Heart left ventricle (tissue), 16 donors: ENCODE measurements at regions of chr2 and their contacts with region 1.

Region 1: GRCh38 chr2:88831792-88832248 is 140.3 kb downstream of the RPIA start:
- DNase-seq: peak in 3 of 5 donors; percentile 32 to 76 (median 49)
- ATAC-seq: peak in 2 of 4 donors; percentile 28 to 44
- H3K4me3 ChIP-seq: no peak overlapping the region
- H3K27ac ChIP-seq: no peak overlapping the region
- H3K4me1 ChIP-seq: peaks cover 0 to 14% (median 0%) of the 10 kb centered on the region in 12 donors
- H3K27me3 ChIP-seq: peaks cover 0 to 6% (median 0%) of the 10 kb centered on the region in 9 donors
- CTCF ChIP-seq: peak in 11 of 12 donors; percentile 47 to 72 (median 58)
- POLR2A ChIP-seq: no peak

Region 2: GRCh38 chr2:88919087-88919738 is 87.4 kb after region 1 on chr2:
- intact Hi-C with region 1: loop called in 1 of 10 experiments (anchors 10 kb)
- DNase-seq: no peak
- ATAC-seq: no peak
- H3K4me3 ChIP-seq: no peak overlapping the region
- H3K27ac ChIP-seq: no peak overlapping the region
- H3K4me1 ChIP-seq: no peaks in the 10 kb centered on the region
- H3K27me3 ChIP-seq: peaks cover 0 to 1% (median 0%) of the 10 kb centered on the region in 9 donors
- CTCF ChIP-seq: peak; percentile 32 to 66 (median 48)
- POLR2A ChIP-seq: no peak

Region 3: DNA sequence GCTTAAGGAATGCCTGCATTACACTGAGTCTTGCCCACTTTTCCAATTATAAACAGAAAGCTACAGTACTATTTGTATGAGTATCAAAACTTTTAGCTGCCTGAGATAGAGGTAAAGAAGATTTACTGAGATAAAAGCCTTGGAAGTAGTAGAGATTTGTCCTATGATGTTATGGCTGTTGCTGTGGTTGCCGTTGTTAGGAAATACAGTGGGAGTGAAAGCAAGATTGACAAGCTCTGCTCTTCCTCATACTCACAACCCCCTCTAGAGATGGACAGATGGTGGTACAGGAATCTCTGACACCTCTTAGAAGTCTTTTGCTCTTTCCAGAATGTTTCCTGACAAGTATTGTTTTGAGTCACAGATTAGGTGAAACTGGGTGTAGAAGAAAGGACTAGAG is 102.2 kb after region 1 on chr2:
- intact Hi-C with region 1: no loop called
- DNase-seq: no peak
- ATAC-seq: no peak
- H3K4me3 ChIP-seq: no peak overlapping the region
- H3K27ac ChIP-seq: no peak overlapping the region
- H3K4me1 ChIP-seq: no peaks in the 10 kb centered on the region
- H3K27me3 ChIP-seq: no peaks in the 10 kb centered on the region
- CTCF ChIP-seq: peak in 3 of 12 donors; percentile 7 to 18 (median 12)
- POLR2A ChIP-seq: no peak

Region 4: DNA sequence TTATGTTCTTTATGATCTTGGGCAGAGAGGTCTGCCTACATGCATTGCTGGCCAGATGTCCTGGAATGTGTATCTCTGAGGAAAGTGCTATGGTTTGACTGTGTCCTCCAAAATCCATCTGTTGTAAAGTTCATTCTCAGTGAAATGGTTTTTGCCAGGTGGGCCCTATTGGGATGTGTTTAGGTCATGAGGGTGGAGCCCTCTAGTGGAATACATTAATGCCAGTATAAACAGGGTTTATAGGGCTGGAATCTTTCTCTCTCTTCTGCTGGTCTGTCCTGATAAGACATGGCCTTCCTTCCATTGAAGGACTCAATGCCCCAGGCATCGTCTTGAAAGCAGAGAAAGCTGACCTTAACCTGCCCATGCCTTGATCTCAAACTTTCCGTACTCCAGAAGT is 118.2 kb after region 1 on chr2:
- intact Hi-C with region 1: no loop called
- DNase-seq: no peak
- ATAC-seq: no peak
- H3K4me3 ChIP-seq: no peak overlapping the region
- H3K27ac ChIP-seq: no peak overlapping the region
- H3K4me1 ChIP-seq: no peaks in the 10 kb centered on the region
- H3K27me3 ChIP-seq: peaks cover 0 to 12% (median 0%) of the 10 kb centered on the region in 9 donors
- CTCF ChIP-seq: peak in 5 of 12 donors; percentile 9 to 34 (median 27)
- POLR2A ChIP-seq: no peak